ENCODE measurements at regions of chr20 and their contacts with region 1.

Region 1: GRCh38 chr20:381581-382290 is 1.2 kb downstream of the TRIB3 start:
- DNase-seq: peak; percentile 77
- H3K27ac ChIP-seq: peak overlapping the region; percentile 99
- CTCF ChIP-seq: no peak

Region 2: GRCh38 chr20:362271-363254 is 19.2 kb before region 1 on chr20:
- CTCF ChIA-PET with region 1: interaction called, 13 read pairs
- POLR2A ChIA-PET with region 1: interaction called, 41 read pairs
- DNase-seq: peak; percentile 96
- H3K27ac ChIP-seq: peak overlapping the region; percentile 90
- CTCF ChIP-seq: no peak; the same call in 1 of the 2 replicates

Measured in RWPE1 (cell line).